Stomach (tissue), 19 donors: ENCODE measurements at regions of chr19 and their contacts with region 1.

Region 1: DNA sequence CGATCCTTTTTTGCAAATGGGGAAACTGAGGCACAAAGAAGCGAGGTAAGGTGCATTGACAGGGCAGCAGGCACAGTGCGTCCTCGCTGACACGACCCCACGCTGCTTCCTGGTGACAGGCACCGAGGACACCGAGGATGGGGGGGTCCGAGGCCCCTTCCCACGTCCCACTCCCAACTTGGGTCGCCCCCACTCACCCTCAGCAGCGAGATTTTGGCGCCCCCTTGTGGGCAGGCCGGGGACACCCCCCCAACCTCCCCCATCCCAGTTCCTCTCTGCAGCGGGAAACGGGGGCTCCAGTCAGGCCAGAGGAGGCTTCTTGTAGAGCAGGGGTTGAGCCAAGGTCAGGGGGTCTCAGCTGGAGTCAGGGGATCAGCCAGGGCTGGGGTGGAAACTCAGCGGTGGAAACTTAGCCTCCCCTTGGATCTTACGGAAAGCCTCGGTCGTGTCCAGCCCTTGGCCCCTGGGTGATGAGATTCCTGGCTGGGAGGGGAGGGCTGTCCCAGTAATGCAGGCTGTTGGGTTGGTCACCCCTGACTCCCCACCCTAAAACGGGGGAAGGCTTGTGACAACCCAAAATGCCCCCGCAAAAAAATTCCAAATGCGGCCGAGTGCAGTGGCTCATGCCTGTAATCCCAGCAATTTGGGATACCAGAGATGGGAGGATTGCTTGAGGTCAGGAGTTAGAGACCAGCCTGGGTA is 8.2 kb downstream of the SMIM24 start:
- DNase-seq: peak; percentile 42 to 53
- H3K4me3 ChIP-seq: no peak overlapping the region
- H3K27ac ChIP-seq: peak overlapping the region in 1 of 5 donors; percentile 62
- H3K4me1 ChIP-seq: peaks cover 15 to 62% (median 43%) of the 10 kb centered on the region in 4 donors
- H3K27me3 ChIP-seq: no peaks in the 10 kb centered on the region
- CTCF ChIP-seq: peak in 5 of 7 experiments; percentile 63 to 83 (median 82)
- EP300 ChIP-seq: no peak
- POLR2A ChIP-seq: no peak

Region 2: GRCh38 chr19:3324321-3324856 is 147.7 kb before region 1 on chr19:
- intact Hi-C with region 1: loop called (anchors 5 kb)
- DNase-seq: peak; percentile 51 to 77
- H3K4me3 ChIP-seq: no peak overlapping the region
- H3K27ac ChIP-seq: no peak overlapping the region
- H3K4me1 ChIP-seq: peaks cover 0 to 13% (median 5%) of the 10 kb centered on the region in 4 donors
- H3K27me3 ChIP-seq: peaks cover 0 to 25% (median 15%) of the 10 kb centered on the region in 3 donors
- CTCF ChIP-seq: peak in 5 of 7 experiments; percentile 62 to 76 (median 70)
- EP300 ChIP-seq: no peak
- POLR2A ChIP-seq: no peak